Activated naive CD4-positive, alpha-beta T cell treated with anti-CD3 and anti-CD28 coated beads for 36 hours (primary cell): ENCODE measurements at regions of chr4 and their contacts with region 1.

Region 1: DNA sequence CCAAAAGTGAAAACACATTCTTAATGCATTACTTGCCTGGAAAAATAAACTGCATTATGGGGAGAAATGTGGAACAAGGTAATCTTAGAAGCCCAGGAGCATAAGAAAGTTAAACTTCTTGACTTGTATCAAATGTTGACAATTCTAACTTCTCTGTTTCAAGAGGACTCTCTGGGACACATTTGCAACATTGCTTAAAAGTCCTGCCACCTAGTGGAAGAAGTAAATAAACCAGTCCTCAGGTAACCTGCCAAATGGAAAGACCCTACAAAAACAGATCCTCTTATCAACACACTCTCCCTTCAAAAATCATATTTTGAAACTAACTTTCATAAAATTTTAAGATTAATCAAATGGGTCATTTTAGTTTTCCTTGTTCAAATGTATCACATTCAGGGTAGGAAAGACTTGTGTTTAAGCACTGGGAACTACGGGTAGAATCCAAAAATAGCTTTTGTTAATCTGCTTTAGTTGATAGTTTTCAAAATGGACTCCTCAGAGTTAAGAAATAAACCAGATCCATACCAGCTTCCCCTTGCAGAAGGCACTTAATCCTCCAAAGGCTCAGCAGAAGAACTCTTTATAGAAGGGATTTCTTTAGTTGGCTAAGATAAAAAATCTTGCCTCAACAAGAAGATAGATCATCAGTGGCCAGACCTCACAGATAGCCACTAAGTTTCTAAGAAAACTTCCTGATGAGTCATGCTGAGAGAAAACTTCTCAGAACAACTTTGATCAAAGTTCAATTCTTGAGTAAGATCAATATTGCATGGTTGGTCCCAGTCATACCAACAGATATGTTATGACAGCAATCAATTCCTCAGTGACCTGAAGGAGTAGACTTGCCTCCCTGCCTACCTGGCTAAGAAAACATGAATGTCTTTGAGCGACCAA is 141.7 kb downstream of the HHIP start:
- DNase-seq: no peak
- H3K4me3 Mint-ChIP-seq: no peak overlapping the region
- H3K27ac Mint-ChIP-seq: no peak overlapping the region
- H3K4me1 Mint-ChIP-seq: no peaks in the 10 kb centered on the region
- H3K27me3 Mint-ChIP-seq: peaks cover 2% of the 10 kb centered on the region

Region 2: GRCh38 chr4:144611846-144612245 is 175.8 kb before region 1 on chr4:
- CTCF ChIA-PET with region 1: no interaction called
- intact Hi-C with region 1: loop called (anchors 2 kb)
- DNase-seq: peak; percentile 20
- H3K4me3 Mint-ChIP-seq: no peak overlapping the region
- H3K27ac Mint-ChIP-seq: no peak overlapping the region
- H3K4me1 Mint-ChIP-seq: no peaks in the 10 kb centered on the region
- H3K27me3 Mint-ChIP-seq: no peaks in the 10 kb centered on the region

Region 3: DNA sequence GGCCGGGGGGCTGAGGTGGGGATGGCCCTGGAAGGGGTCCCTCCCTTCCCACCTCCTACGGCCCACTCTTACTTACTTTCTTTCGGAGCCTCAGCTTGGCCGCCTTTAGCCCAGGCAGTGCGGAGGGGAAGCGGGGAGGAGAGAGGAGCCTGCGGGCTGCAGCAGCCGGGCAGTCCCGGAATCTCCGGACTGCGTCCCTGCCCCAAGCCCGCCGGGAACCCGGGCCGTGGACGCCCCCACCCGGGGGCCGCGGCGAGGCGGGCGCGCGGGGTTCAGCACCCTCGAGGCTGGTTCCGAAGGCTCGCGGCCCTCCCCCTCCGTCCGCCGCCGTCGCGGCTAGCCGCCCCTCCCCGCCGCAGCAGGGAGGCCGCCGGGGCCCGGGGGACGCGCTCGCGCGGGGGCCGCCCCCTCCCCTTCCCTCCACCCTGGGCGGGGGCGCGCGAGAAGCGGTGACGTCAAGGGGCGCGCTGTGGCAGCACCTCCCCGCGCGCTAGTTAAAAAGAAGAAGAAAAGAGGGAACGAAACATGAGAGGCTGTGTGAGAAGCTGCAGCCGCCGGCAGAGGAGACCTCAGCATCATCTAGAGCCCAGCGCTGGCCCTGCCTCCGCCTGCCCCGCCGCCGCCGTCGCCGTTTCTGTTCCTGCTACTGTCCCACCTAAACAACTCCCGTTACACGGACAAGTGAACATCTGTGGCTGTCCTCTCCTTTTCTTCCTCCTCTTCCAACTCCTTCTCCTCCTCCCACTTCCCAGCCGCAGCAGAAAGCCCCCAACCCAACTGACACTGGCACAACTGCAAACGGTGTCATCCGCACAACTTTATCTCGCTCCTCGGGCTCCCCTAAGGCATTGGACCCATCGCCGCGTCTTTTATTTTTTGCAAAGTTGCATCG is 141.7 kb before region 1 on chr4 and contains the start of gene HHIP:
- CTCF ChIA-PET with region 1: no interaction called
- intact Hi-C with region 1: loop called (anchors 10 kb)
- DNase-seq: peak; percentile 25
- H3K4me3 Mint-ChIP-seq: peak within 1 kb of the TSS; percentile 77
- H3K27ac Mint-ChIP-seq: no peak within 1 kb of the TSS
- H3K4me1 Mint-ChIP-seq: peaks cover 15% of the 10 kb centered on the region
- H3K27me3 Mint-ChIP-seq: peaks cover 46% of the 10 kb centered on the region
- total RNA-seq, gene HHIP: not detected